WTC11 (cell line): ENCODE measurements at regions of chr10 and their contacts with region 1.

Region 1: GRCh38 chr10:5623081-5623748 is 43.2 kb downstream of the ASB13 start:
- DNase-seq: peak; percentile 96
- ATAC-seq: peak; percentile 96
- H3K4me3 Mint-ChIP-seq: no peak overlapping the region
- H3K27ac Mint-ChIP-seq: no peak overlapping the region
- H3K4me1 Mint-ChIP-seq: peaks cover 4% of the 10 kb centered on the region
- H3K27me3 Mint-ChIP-seq: no peaks in the 10 kb centered on the region
- CTCF ChIP-seq: peak; percentile 84

Region 2: GRCh38 chr10:5446390-5446926 is 176.8 kb before region 1 on chr10:
- CTCF ChIA-PET with region 1: interaction called, 45 read pairs
- POLR2A ChIA-PET with region 1: interaction called, 8 read pairs
- DNase-seq: peak; percentile 95
- ATAC-seq: peak; percentile 98
- H3K4me3 Mint-ChIP-seq: peak overlapping the region; percentile 82
- H3K27ac Mint-ChIP-seq: peak overlapping the region; percentile 93
- H3K4me1 Mint-ChIP-seq: peaks cover 34% of the 10 kb centered on the region
- H3K27me3 Mint-ChIP-seq: no peaks in the 10 kb centered on the region
- CTCF ChIP-seq: no peak

Region 3: DNA sequence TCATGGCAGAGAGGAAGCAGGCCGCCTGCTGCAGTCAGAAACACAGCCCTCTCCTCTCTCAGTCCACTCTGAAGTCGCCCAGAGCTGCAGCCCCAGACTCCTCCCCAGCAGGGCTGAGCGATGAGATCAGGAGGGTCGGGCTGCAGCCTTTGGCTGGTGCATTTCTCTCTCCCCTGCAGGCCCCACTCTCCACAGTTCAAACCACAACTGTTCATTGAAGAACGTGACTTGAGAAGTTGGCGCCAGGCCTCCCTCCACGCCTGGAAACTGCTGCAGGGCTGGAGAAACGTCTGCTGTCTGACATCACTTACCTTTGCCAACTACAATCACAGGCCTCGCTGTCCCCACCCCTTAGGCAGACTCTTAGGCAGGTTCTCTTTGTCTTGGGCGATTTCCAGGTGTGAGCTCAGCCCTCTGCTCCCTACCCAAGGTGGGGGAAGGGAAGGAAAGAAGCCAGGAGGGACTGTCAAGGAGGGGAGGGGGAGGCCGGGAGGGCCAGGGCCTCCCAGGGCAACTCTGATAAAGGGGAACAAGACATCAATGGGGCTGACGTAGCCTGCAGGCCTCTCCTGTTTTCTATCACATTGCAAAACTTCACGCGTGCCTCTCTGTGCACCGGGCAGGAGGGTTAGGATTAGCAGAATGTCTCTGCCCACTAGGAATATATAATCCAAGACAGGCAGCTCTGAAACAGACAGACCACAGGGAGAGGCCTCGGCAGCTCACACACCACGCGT is 156.6 kb before region 1 on chr10:
- CTCF ChIA-PET with region 1: interaction called, 26 read pairs
- POLR2A ChIA-PET with region 1: no interaction called
- DNase-seq: peak; percentile 64
- ATAC-seq: peak; percentile 86
- H3K4me3 Mint-ChIP-seq: peak overlapping the region; percentile 45
- H3K27ac Mint-ChIP-seq: peak overlapping the region; percentile 99
- H3K4me1 Mint-ChIP-seq: peaks cover 67% of the 10 kb centered on the region
- H3K27me3 Mint-ChIP-seq: peaks cover 29% of the 10 kb centered on the region
- CTCF ChIP-seq: no peak

Region 4: DNA sequence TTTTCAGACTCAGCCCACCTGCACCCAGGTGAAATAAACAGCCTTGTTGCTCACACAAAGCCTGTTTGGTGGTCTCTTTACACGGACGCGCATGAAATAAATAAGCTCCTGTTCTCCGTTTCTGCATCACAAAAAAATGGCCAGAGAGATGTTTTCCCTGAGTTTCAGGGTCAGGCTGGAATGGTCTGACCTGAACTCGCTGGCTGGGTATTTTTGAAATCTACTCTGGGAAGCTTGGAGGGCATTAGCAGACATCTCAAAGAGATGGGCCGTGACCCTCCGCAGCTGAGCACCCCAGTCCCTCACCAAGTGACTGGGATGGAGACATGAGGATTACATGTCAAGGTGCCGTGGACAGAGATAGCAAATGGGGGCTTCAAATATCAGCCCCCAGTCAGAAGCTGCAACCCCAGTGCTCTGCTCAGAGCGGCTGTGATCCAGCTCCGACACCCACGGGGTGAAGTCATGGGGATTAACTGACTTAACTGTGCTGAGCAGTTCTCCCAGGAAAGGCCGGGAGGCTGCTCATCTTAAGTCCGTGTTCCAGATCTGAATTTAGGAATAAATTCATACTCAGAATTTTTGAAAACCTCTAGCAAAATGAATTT is 146.2 kb before region 1 on chr10:
- CTCF ChIA-PET with region 1: interaction called, 10 read pairs
- POLR2A ChIA-PET with region 1: no interaction called
- DNase-seq: no peak
- ATAC-seq: peak; percentile 79
- H3K4me3 Mint-ChIP-seq: peak overlapping the region; percentile 20; the same call in 1 of the 2 replicates
- H3K27ac Mint-ChIP-seq: no peak overlapping the region
- H3K4me1 Mint-ChIP-seq: peaks cover 7% of the 10 kb centered on the region
- H3K27me3 Mint-ChIP-seq: peaks cover 3% of the 10 kb centered on the region; the same call in 1 of the 2 replicates
- CTCF ChIP-seq: no peak

Region 5: DNA sequence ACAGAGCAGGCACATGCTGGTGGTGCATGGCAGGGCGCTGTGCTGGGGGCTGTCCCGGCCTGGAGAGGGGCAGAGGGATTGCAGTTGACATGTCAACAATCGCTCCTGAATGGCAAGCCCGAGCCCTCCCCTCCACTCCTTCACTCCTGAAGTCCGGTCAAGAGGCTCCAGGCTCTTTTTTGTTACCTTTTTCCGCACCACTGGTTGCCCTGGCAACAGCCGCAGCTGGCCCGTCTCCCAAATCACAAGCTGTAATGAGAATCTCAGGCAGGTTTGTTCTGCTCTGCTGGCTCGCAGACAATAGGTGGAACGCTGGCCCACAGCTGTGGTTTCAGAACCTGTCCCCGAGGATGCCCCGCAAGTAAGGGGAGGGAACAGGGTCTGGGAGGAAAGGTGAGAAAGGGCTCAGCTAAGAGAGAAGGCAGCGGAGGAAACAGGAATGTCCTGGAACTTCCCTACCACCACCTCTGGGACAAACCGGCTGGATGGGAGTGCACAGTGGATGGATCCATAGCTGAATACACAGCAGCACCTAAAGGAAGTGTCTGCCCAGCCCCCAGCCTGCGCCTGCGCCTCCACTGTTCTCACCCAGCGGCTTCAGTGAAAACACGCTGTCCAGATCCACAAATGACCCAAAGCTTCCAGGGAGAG is 39.6 kb before region 1 on chr10:
- CTCF ChIA-PET with region 1: interaction called, 15 read pairs
- POLR2A ChIA-PET with region 1: no interaction called
- DNase-seq: peak; percentile 63
- ATAC-seq: peak; percentile 58
- H3K4me3 Mint-ChIP-seq: no peak overlapping the region
- H3K27ac Mint-ChIP-seq: peak overlapping the region; percentile 31; the same call in 1 of the 2 replicates
- H3K4me1 Mint-ChIP-seq: peaks cover 41% of the 10 kb centered on the region
- H3K27me3 Mint-ChIP-seq: 0 out of 2 replicates have a peak, but pooled peaks cover 4% of the 10 kb centered on the region
- CTCF ChIP-seq: no peak

Region 6: DNA sequence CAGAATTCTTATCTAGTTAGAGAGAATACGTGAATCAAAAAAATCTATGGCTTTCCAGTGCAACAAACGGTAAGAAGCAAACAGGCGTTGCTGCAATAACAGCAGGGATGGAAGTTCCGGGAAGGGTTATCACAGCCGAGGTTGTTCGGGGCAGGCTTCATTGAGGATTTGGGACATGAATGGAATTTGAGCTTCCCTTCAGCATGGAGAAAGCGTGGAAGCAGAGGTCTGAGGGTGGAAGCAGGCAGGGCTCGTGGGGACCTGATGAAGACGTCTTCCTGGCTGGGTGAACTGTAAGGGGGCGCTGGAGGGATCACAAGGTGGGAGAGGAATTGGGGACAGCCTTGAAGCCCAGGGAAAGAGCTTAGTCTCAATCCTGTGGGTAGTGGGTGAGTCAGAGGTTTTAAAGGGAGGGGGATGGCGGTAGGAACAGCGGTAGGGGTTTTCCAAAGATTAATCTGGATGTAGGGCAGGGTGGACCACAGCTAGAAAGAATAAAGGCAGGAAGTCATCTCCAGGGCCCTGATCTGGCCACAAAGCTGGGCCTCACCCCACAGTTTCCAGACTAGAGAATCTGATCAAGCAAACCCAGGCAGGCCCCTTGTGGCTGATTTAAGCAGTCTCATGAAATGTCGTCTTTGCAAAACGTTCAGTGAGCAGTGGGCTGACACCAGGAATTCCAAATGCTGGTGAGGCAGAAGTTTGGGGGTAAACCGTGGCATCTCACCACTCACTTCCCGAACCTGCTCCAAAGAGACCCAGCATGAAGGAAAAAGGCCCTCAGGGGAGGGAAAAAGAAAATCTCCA is 33.3 kb before region 1 on chr10:
- CTCF ChIA-PET with region 1: interaction called, 15 read pairs
- POLR2A ChIA-PET with region 1: no interaction called
- DNase-seq: no peak
- ATAC-seq: peak; percentile 43
- H3K4me3 Mint-ChIP-seq: no peak overlapping the region
- H3K27ac Mint-ChIP-seq: no peak overlapping the region
- H3K4me1 Mint-ChIP-seq: peaks cover 50% of the 10 kb centered on the region
- H3K27me3 Mint-ChIP-seq: 0 out of 2 replicates have a peak, but pooled peaks cover 4% of the 10 kb centered on the region
- CTCF ChIP-seq: no peak

Region 7: GRCh38 chr10:5737352-5737751 is 114.1 kb after region 1 on chr10:
- CTCF ChIA-PET with region 1: no interaction called
- POLR2A ChIA-PET with region 1: no interaction called
- DNase-seq: peak; percentile 48
- ATAC-seq: peak; percentile 97
- H3K4me3 Mint-ChIP-seq: no peak overlapping the region
- H3K27ac Mint-ChIP-seq: peak overlapping the region; percentile 54; the same call in 1 of the 2 replicates
- H3K4me1 Mint-ChIP-seq: peaks cover 5% of the 10 kb centered on the region
- H3K27me3 Mint-ChIP-seq: no peaks in the 10 kb centered on the region
- CTCF ChIP-seq: no peak